Lower leg skin (tissue), 4 donors: ENCODE measurements at regions of chr14 and their contacts with region 1.

Region 1: GRCh38 chr14:21098076-21098891 is at the start of gene ZNF219:
- DNase-seq: peak in 1 of 2 donors; percentile 93
- H3K4me3 ChIP-seq: peak within 1 kb of the TSS; percentile 26
- CTCF ChIP-seq: no peak
- POLR2A ChIP-seq: no peak
- total RNA-seq, gene ZNF219: 56.9 to 89.9 (median 82.2) TPM

Region 2: GRCh38 chr14:20855652-20856291 is 242.5 kb before region 1 on chr14:
- intact Hi-C with region 1: loop called (anchors 5 kb)
- DNase-seq: peak in 1 of 2 donors; percentile 45
- H3K4me3 ChIP-seq: no peak overlapping the region
- CTCF ChIP-seq: no peak
- POLR2A ChIP-seq: no peak

Region 3: GRCh38 chr14:21163871-21164291 is 65.6 kb after region 1 on chr14:
- intact Hi-C with region 1: no loop called
- DNase-seq: no peak
- H3K4me3 ChIP-seq: no peak overlapping the region
- CTCF ChIP-seq: no peak
- POLR2A ChIP-seq: no peak